AG04450 (cell line): ENCODE measurements at regions of chr9 and their contacts with region 1.

Region 1: GRCh38 chr9:111631071-111631971 is at the start of gene DNAJC25:
- DNase-seq: peak; percentile 97
- H3K4me3 ChIP-seq: peak within 1 kb of the TSS; percentile 92
- H3K27ac ChIP-seq: peak within 1 kb of the TSS; percentile 41
- H3K27me3 ChIP-seq: no peaks in the 10 kb centered on the region
- CTCF ChIP-seq: no peak
- polyA plus RNA-seq, gene DNAJC25: 9.6 and 14.1 TPM in 2 replicates

Region 2: GRCh38 chr9:111348821-111349271 is 282.5 kb before region 1 on chr9:
- CTCF ChIA-PET with region 1: no interaction called
- POLR2A ChIA-PET with region 1: no interaction called
- DNase-seq: no peak
- H3K4me3 ChIP-seq: no peak overlapping the region
- H3K27ac ChIP-seq: no peak overlapping the region
- H3K27me3 ChIP-seq: no peaks in the 10 kb centered on the region
- CTCF ChIP-seq: no peak

Region 3: GRCh38 chr9:111661150-111661801 is 30.0 kb after region 1 on chr9 and contains the start of gene GNG10:
- CTCF ChIA-PET with region 1: no interaction called
- POLR2A ChIA-PET with region 1: interaction called, 13 read pairs
- DNase-seq: no peak
- H3K4me3 ChIP-seq: peak within 1 kb of the TSS; percentile 90
- H3K27ac ChIP-seq: peak within 1 kb of the TSS; percentile 39
- H3K27me3 ChIP-seq: no peaks in the 10 kb centered on the region
- CTCF ChIP-seq: no peak
- polyA plus RNA-seq, gene GNG10: 87.6 and 108 TPM in 2 replicates